Gastrocnemius medialis (tissue), 4 donors: ENCODE measurements at regions of chr20 and their contacts with region 1.

Region 1: GRCh38 chr20:8156235-8157079 is 24.4 kb downstream of the PLCB1 start:
- DNase-seq: no peak
- ATAC-seq: no peak
- H3K4me3 ChIP-seq: no peak overlapping the region
- H3K27ac ChIP-seq: peak overlapping the region; percentile 62 to 85 (median 70)
- H3K4me1 ChIP-seq: peaks cover 63 to 72% of the 10 kb centered on the region in 2 donors
- H3K27me3 ChIP-seq: no peaks in the 10 kb centered on the region
- CTCF ChIP-seq: no peak
- POLR2A ChIP-seq: no peak

Region 2: GRCh38 chr20:8094415-8094818 is 62.0 kb before region 1 on chr20:
- in situ Hi-C with region 1: no loop called
- intact Hi-C with region 1: no loop called
- DNase-seq: peak; percentile 37 to 50
- ATAC-seq: peak; percentile 62 to 72
- H3K4me3 ChIP-seq: no peak overlapping the region
- H3K27ac ChIP-seq: no peak overlapping the region
- H3K4me1 ChIP-seq: no peaks in the 10 kb centered on the region
- H3K27me3 ChIP-seq: no peaks in the 10 kb centered on the region
- CTCF ChIP-seq: no peak
- POLR2A ChIP-seq: no peak

Region 3: DNA sequence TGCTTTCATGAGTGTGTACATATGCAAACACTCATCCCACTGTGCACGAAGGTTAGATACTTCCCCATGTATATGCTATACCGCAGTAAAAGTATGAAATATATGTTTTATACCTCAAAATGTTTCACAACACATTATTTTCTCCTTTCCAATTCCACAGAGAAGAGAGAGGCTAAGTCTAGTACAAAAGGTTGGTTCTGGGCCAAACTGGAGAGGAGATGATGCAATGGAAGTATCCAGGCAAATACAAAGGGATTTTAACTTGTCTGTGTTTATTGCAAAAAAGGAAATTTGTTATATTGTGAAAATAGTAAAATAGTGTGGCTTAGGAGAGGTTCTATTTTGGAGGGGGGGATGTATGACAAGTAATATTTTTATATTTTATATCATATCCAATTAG is 88.2 kb after region 1 on chr20:
- in situ Hi-C with region 1: no loop called
- intact Hi-C with region 1: loop called (anchors 5 kb)
- DNase-seq: peak; percentile 25 to 41
- ATAC-seq: peak in 1 of 2 donors; percentile 74
- H3K4me3 ChIP-seq: no peak overlapping the region
- H3K27ac ChIP-seq: peak overlapping the region; percentile 63 to 70 (median 64)
- H3K4me1 ChIP-seq: peaks cover 44 to 45% of the 10 kb centered on the region in 2 donors
- H3K27me3 ChIP-seq: no peaks in the 10 kb centered on the region
- CTCF ChIP-seq: no peak
- POLR2A ChIP-seq: no peak